SK-N-SH (cell line): ENCODE measurements at regions of chrX and their contacts with region 1.

Region 1: DNA sequence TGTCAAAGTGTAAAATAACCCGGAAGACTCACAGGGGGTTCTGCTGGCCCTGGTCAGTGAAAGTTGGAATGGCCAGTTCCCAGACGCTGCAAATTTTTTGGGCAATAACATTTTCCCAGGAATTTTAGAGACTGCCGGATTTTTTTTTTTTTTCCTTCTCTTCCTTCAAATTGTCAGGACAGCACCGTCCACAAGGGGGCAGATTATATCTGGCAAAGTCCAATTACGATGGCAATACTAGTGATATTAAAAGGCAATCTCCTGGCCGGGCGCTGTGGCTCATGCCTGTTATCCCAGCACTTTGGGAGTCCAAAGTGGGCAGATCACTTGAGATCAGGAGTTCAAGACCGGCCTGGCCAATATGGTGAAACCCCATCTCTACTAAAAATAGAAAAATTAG is 20.5 kb downstream of the SLC25A5 start:
- DNase-seq: peak; percentile 71
- H3K4me3 ChIP-seq: no peak overlapping the region
- H3K27ac ChIP-seq: no peak overlapping the region
- H3K4me1 ChIP-seq: no peaks in the 10 kb centered on the region
- H3K27me3 ChIP-seq: peaks cover 5% of the 10 kb centered on the region; the same call in 1 of the 2 replicates
- CTCF ChIP-seq: peak; percentile 81
- EP300 ChIP-seq: no peak
- RAD21 ChIP-seq: peak; percentile 64

Region 2: DNA sequence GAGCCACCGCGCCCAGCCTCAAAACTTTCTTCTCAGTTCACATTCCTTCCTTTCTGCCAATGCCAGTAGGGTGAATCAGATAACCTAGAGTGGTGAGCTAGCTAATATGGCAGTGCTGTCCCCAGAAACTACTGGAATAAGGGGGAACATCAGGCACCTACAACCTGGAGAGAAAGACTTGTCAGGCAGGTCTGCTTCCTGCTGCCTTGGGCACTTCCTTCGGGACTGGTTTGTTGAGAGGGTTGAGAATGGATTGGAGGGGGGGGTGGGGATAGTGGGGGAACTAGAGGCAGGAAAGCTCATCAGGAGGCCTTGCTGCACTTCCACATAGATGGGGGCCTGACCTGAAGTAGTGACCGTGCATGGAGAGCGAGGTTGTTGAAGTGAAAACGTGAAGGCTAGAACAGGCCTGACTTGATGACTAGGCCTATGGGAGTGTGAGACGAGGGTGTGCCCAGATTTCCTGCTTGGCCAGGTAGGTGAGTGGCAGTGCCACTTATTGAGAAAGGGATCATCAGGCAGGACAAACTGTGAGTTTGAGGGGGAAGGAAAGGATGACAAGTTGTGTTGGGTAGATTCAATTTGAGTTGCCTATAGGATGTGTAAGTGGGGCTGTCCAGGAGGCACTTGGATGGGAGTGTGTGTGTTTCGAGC is 12.9 kb after region 1 on chrX:
- CTCF ChIA-PET with region 1: interaction called, 14 read pairs
- POLR2A ChIA-PET with region 1: no interaction called
- DNase-seq: no peak
- H3K4me3 ChIP-seq: no peak overlapping the region
- H3K27ac ChIP-seq: peak overlapping the region in 1 of 2 experiments; percentile 77; a peak in 2 of 4 replicates
- H3K4me1 ChIP-seq: peaks cover 0 to 4% of the 10 kb centered on the region in 2 experiments; a peak in 1 of 4 replicates
- H3K27me3 ChIP-seq: 0 out of 2 replicates have a peak, but pooled peaks cover 9% of the 10 kb centered on the region
- CTCF ChIP-seq: no peak
- EP300 ChIP-seq: no peak
- RAD21 ChIP-seq: no peak